ENCODE measurements at regions of chr3 and their contacts with region 1.

Region 1: DNA sequence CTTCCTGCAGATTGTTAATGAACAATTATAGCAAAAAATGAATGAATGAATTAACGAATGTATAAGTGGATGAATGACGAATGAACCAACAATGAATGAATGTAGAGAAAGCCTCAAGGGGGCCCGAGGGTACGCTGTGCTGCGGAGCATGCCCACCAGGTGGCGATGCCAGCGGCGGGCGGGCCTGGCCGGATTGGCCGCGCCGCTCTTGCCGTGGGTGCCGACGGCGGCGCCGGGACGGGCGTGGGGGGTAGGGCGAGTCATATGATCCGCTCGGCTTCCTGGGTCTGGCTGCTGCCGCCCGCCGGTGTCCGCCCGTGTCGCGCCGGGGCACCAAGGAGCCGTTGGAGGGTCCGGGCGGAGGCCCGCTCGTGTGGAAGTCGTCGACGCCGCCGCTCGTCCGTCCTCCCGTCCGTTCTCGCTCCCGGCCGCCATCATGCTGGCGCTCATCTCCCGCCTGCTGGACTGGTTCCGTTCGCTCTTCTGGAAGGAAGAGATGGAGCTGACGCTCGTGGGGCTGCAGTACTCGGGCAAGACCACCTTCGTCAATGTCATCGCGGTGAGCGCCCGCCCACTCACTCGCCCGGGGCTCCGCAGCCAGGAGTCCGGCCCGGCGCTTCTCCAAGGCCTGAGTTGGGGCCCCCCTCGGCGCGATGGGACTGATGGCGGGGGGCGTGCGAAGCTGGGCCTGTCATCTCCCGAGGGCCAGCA is at the start of gene ARL8B:
- DNase-seq: peak; percentile 85 to 95 (median 90)
- H3K4me3 ChIP-seq: peak within 1 kb of the TSS; percentile 63 to 100 (median 99)
- H3K27ac ChIP-seq: peak within 1 kb of the TSS; percentile 53 to 99 (median 89)
- H3K27me3 ChIP-seq: no peaks in the 10 kb centered on the region
- CTCF ChIP-seq: peak; percentile 94 to 100 (median 99)
- total RNA-seq, gene ARL8B: 66.6 to 154 (median 120) TPM

Region 2: GRCh38 chr3:4994823-4995499 is 127.2 kb before region 1 on chr3:
- intact Hi-C with region 1: no loop called
- DNase-seq: peak in 5 of 10 donors; percentile 41 to 78 (median 48)
- H3K4me3 ChIP-seq: no peak overlapping the region
- H3K27ac ChIP-seq: peak overlapping the region in 16 of 59 donors; percentile 13 to 79 (median 37)
- H3K27me3 ChIP-seq: no peaks in the 10 kb centered on the region
- CTCF ChIP-seq: no peak

Region 3: GRCh38 chr3:5187156-5187919 is 65.2 kb after region 1 on chr3 and contains the start of gene EDEM1:
- intact Hi-C with region 1: loop called (anchors 2 kb)
- DNase-seq: peak; percentile 87 to 98 (median 91)
- H3K4me3 ChIP-seq: peak within 1 kb of the TSS; percentile 63 to 100 (median 95)
- H3K27ac ChIP-seq: peak within 1 kb of the TSS; percentile 29 to 97 (median 89)
- H3K27me3 ChIP-seq: no peaks in the 10 kb centered on the region
- CTCF ChIP-seq: peak in 22 of 56 donors; percentile 3 to 60 (median 24)
- total RNA-seq, gene EDEM1: 12.6 to 36.0 (median 23.0) TPM

Measured in dorsolateral prefrontal cortex (tissue), 120 donors.